ENCODE measurements at regions of chr4 and their contacts with region 1.

Region 1: DNA sequence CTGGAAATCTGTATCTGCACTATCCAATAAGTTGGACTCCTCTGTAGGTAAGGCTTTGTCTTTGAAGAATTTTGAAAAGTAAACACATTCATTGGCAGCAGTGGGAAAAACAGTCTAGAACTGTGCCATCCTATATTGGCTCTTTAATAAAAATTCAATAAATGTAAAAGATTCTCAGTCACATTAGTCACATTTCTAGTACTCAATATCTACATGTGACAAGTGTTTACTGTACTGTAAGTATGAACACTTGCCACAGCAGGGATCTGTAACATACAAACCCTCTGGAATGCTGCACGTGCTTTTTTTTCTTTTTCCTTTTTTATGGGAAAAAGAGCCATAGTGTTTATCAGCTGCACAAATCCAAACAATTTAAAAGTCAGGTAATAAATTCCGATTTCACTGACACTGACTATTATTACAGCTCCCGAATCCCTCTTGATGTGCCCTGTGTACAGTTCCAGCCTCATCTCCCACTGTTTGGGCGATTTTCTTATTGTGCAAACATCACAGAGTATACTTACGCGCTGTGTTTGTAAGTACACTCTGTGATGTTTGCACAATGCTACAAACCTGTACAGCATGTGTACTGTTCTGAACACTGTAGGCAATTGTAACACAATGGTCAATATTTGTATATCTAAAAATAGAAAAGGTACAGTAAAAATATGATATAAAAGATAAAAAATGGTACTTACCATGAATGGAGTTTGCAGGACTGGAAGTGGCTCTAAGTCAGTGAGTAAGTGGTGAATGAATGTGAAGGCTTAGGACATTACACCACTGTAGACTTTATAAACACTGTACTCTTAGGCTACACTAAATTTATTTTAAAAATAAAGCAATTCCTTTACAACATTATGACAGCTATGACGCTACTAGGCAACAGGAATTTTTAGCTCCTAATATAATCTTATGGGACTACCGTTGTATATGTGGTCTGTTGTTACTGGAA is 8.7 kb downstream of the PYURF start:
- DNase-seq: no peak
- H3K4me3 ChIP-seq: no peak overlapping the region
- H3K27ac ChIP-seq: no peak overlapping the region
- H3K4me1 ChIP-seq: no peaks in the 10 kb centered on the region
- H3K27me3 ChIP-seq: no peaks in the 10 kb centered on the region
- CTCF ChIP-seq: no peak
- POLR2A ChIP-seq: no peak

Region 2: DNA sequence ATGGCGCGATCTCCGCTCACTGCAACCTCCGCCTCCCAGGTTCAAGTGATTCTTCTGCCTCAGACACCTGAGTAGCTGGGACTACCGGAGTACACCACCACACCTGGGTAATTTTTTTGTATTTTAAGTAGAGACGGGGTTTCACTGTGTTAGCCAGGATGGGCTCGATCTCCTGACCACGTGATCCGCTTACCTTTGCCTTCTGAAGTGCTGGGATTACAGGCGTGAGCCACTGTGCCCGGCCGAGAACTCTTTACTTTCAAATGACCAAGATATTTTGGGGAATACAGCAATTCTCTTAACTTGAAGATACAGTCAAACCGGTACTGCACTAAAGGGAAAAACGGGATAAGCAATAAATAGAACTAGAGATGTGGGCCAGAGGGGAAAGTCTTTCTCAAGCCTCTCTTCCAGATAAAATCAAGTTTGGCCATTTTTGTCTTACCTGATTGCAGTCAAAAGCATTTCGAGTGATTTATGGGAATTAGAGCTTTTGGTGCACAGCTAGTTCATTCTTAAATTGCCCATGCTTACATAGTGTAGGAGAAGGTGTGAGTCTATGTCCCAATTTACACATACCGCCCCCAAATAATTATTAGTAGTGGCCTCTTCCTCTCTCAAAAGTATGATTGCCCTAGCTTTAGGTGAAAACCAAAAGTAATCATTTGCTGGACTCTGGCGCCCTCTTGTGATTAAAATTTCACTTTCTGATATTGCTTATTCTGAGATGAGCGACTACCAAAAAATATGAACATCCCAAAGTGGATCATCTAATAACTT is 303.2 kb before region 1 on chr4:
- intact Hi-C with region 1: loop called (anchors 5 kb)
- DNase-seq: no peak
- H3K4me3 ChIP-seq: no peak overlapping the region
- H3K27ac ChIP-seq: no peak overlapping the region
- H3K4me1 ChIP-seq: no peaks in the 10 kb centered on the region
- H3K27me3 ChIP-seq: no peaks in the 10 kb centered on the region
- CTCF ChIP-seq: peak; percentile 53 to 67 (median 66)
- POLR2A ChIP-seq: no peak

Region 3: GRCh38 chr4:88378691-88379559 is 135.9 kb before region 1 on chr4 and contains the start of gene HERC6:
- intact Hi-C with region 1: loop called (anchors 10 kb)
- DNase-seq: no peak
- H3K4me3 ChIP-seq: peak within 1 kb of the TSS; percentile 98 to 100
- H3K27ac ChIP-seq: peak within 1 kb of the TSS; percentile 99
- H3K4me1 ChIP-seq: no peaks in the 10 kb centered on the region
- H3K27me3 ChIP-seq: no peaks in the 10 kb centered on the region
- CTCF ChIP-seq: peak in 2 of 3 experiments; percentile 49 to 66
- POLR2A ChIP-seq: no peak
- total RNA-seq, gene HERC6: 14.5 TPM

Region 4: GRCh38 chr4:89788206-89789072 is 1273.6 kb after region 1 on chr4:
- intact Hi-C with region 1: loop called (anchors 5 kb)
- DNase-seq: no peak
- H3K4me3 ChIP-seq: no peak overlapping the region
- H3K27ac ChIP-seq: no peak overlapping the region
- H3K4me1 ChIP-seq: no peaks in the 10 kb centered on the region
- H3K27me3 ChIP-seq: no peaks in the 10 kb centered on the region
- CTCF ChIP-seq: no peak
- POLR2A ChIP-seq: no peak

Region 5: GRCh38 chr4:89878611-89879010 is 1363.8 kb after region 1 on chr4:
- intact Hi-C with region 1: no loop called
- DNase-seq: no peak
- H3K4me3 ChIP-seq: no peak overlapping the region
- H3K27ac ChIP-seq: no peak overlapping the region
- H3K4me1 ChIP-seq: no peaks in the 10 kb centered on the region
- H3K27me3 ChIP-seq: no peaks in the 10 kb centered on the region
- CTCF ChIP-seq: no peak
- POLR2A ChIP-seq: no peak